Aorta (tissue), 5 donors: ENCODE measurements at regions of chr18 and their contacts with region 1.

Region 1: GRCh38 chr18:55405893-55406406 is 182.0 kb downstream of the TCF4 start:
- DNase-seq: peak; percentile 91
- ATAC-seq: peak; percentile 68
- H3K4me3 ChIP-seq: no peak overlapping the region
- H3K27ac ChIP-seq: peak overlapping the region in 1 of 2 donors; percentile 48
- H3K4me1 ChIP-seq: no peaks in the 10 kb centered on the region
- H3K27me3 ChIP-seq: no peaks in the 10 kb centered on the region

Region 2: DNA sequence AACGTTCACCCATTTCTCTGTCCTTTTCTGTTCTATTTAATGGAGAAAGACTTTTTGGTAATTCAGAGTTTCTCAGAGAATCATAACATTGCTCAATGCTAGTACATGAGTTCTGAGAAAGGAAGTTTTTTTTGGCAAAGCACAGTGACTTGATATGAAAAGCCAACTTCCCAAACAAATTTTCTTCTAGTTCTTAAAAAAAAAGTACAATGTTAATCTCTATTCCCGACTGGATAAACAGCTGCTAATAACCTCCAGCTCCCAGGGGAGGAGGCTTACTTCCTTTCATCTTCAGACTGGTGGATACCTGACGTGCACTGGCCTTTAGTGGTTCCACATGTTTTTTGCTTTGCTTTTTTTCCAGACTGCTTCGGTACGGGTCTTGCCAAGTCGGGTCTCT is 162.1 kb before region 1 on chr18:
- intact Hi-C with region 1: loop called (anchors 5 kb)
- DNase-seq: no peak
- ATAC-seq: peak; percentile 82
- H3K4me3 ChIP-seq: peak overlapping the region in 1 of 2 donors; percentile 3
- H3K27ac ChIP-seq: peak overlapping the region; percentile 94 to 95
- H3K4me1 ChIP-seq: peaks cover 3% of the 10 kb centered on the region in 2 donors
- H3K27me3 ChIP-seq: no peaks in the 10 kb centered on the region

Region 3: GRCh38 chr18:55337908-55338521 is 67.9 kb before region 1 on chr18:
- intact Hi-C with region 1: loop called (anchors 5 kb)
- DNase-seq: peak in 1 of 2 donors; percentile 76
- ATAC-seq: peak; percentile 78
- H3K4me3 ChIP-seq: peak overlapping the region; percentile 2 to 47
- H3K27ac ChIP-seq: peak overlapping the region; percentile 84
- H3K4me1 ChIP-seq: peaks cover 0 to 4% of the 10 kb centered on the region in 2 donors
- H3K27me3 ChIP-seq: no peaks in the 10 kb centered on the region

Region 4: DNA sequence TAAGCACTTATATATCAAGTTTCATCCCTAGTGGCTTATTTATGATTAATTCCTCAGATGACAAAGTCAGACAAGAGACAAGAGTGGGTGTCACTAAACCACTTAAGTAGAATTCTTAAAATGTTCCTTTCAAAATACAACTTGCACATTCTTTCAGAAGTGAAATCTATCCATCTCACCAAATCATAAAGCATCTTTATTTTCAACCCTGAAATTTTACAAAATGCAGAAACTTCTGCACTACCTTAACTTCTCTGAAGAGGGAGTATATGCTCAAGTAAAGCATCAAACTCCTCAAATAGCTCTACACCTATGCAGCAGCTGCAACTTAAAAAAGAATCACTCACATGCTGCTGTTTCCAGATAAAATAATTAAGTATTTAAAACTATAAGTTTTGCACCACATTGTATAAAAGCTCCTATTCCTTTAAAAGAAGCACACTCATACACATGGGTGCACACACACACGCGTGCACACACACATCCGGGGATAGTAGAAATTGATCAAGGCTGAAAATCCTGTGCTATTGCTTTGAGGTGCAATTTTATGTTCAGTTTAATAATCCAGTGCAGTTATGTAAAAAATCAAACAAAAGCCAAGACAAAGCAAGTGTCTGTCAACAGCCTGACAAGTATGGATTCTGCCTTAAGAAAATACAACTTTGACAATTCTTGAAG is 62.4 kb before region 1 on chr18:
- intact Hi-C with region 1: loop called (anchors 5 kb)
- DNase-seq: no peak
- ATAC-seq: no peak
- H3K4me3 ChIP-seq: no peak overlapping the region
- H3K27ac ChIP-seq: no peak overlapping the region
- H3K4me1 ChIP-seq: no peaks in the 10 kb centered on the region
- H3K27me3 ChIP-seq: no peaks in the 10 kb centered on the region